KBM-7 (cell line): ENCODE measurements at regions of chr1 and their contacts with region 1.

Region 1: GRCh38 chr1:36109041-36109679 is 15.9 kb downstream of the COL8A2 start:
- DNase-seq: peak; percentile 22

Region 2: DNA sequence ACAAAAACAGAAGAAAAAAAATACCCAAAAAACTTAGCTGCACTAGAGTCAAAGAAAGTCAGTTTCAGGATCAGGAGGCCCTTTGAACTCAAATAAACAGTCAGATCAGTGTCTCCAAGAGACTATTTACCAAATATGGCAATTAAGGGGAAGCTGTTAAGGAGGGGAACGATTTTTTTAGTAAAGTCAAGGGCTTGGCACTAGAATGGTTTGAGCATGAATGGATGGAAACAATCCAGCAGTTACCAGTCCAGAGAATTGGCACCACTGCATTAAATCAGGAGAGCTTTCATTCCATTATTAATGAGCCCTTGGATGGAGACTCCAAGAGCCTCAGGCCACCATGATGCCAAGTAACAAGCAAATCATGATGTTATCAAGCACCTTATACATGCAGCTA is 33.0 kb after region 1 on chr1:
- in situ Hi-C with region 1: loop called (anchors 5 kb)
- DNase-seq: no peak

Region 3: DNA sequence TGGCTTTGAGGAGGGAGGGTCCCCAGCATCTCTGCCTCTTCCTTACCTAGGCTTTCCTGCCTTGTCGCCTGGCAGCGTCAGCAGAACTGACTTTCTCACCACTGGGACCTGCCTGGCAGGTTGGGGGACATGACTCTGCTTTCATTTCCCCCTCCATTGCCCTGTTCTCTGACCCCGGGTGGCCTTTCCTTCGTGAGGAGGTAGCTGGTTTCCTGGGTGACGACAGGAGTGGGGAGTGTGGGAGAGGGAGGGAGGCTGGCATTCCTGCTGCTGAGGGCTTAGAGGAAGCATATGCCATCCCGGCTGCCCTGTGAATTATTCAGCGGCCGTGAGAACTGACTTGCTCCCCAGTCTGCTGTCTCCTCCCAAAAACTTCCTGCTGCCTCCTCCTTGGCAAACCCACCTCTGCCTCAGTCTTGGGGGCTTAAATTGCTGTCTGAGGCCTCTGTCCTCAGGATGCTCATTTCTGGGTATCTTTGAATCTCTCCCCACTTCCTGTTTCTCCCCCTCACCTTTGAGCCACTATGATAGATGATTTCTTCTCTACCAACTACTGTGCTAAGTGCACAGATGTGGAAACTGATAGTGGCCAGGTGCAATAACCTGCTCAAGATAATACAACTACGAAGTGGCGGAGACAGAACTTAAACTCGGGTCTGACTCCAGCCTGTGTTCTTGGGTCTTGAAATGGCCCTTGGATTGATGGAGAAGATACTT is 555.6 kb after region 1 on chr1:
- in situ Hi-C with region 1: no loop called
- DNase-seq: no peak

Region 4: DNA sequence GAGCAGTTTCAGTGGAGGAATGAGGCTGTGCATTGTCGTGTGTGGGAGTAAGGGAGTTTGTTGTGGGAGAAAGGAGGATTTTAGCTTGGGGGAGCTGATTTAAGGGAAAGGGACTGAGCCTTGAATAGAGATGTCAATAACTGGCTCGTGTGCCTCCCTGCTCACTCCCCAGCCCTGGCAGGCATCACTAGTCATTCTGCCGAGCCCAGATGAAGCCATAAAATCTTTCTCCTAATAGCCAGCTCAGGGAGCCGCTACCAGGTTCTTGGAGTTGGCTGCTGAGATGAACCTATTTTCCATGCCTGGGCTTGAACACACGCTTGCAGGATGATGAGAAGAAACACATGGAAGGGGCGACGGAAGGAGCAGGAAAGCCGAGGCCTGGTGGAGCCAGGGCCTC is 2002.4 kb after region 1 on chr1:
- in situ Hi-C with region 1: no loop called
- DNase-seq: no peak